Body of pancreas (tissue), 4 donors: ENCODE measurements at regions of chr5 and their contacts with region 1.

Region 1: GRCh38 chr5:90434116-90434714 is 24.7 kb upstream of the CETN3 start:
- DNase-seq: peak; percentile 27 to 65 (median 38)
- ATAC-seq: no peak
- H3K4me3 ChIP-seq: no peak overlapping the region
- H3K27ac ChIP-seq: no peak overlapping the region
- H3K4me1 ChIP-seq: peaks cover 7% of the 10 kb centered on the region
- H3K27me3 ChIP-seq: no peaks in the 10 kb centered on the region
- CTCF ChIP-seq: peak in 6 of 7 experiments; percentile 22 to 57 (median 40)
- POLR2A ChIP-seq: no peak

Region 2: DNA sequence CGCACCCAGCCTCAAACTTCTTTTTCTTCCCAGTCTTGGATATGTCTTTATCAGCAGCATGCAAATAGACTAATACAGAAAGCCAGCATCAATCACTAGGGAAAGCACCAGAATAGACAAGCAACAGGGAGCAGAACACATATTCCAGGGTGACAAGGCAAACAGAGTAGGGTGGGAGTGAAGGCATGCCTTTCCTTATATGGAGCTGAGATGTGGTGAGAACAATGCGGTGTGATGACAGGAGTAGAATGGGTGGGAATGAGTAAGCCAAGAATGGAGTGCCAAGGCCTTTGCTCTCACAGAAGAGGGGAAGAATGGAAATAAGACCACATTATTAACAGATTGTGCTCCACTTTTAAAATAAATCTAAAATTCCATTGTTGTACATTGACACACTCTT is 140.3 kb before region 1 on chr5:
- intact Hi-C with region 1: no loop called
- DNase-seq: no peak
- ATAC-seq: no peak
- H3K4me3 ChIP-seq: no peak overlapping the region
- H3K27ac ChIP-seq: no peak overlapping the region
- H3K4me1 ChIP-seq: no peaks in the 10 kb centered on the region
- H3K27me3 ChIP-seq: no peaks in the 10 kb centered on the region
- CTCF ChIP-seq: no peak
- POLR2A ChIP-seq: no peak

Region 3: DNA sequence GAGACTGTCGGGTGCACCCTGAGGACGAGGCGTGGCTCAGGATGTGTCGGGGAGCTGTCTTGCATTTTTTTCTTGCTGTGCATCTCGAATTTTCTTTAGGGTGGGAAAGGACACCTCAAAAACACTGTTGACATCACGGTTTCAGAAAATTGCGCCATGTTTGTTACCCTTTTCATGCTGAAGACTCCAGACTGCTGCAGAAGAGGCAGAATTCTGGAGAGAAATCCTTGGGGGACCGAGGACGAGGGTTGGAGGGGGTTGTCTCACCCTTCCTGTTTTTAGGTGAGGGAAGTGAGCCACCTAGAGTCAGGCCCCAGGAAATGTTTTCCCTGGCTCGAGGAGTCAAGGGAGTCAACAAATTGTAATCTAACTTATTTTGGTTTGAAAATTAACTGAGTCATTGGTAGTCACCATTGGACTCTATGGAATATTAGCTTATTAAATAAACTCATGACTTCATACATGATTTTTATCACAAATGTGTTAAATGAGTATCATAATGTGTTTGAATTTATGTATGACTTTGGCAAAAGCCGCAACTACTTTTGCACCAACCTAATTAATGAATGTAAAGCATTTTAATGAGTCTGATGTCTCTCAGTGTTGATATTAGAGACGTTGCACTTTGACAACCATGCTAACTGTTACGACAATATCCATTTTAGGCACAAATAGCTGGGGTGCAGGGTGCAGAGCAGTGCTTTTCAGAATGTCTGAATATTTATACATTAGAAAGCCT is 95.9 kb after region 1 on chr5:
- intact Hi-C with region 1: loop called (anchors 10 kb)
- DNase-seq: peak; percentile 72 to 81 (median 75)
- ATAC-seq: peak; percentile 76
- H3K4me3 ChIP-seq: peak overlapping the region; percentile 87 to 91
- H3K27ac ChIP-seq: peak overlapping the region; percentile 76 to 94 (median 89)
- H3K4me1 ChIP-seq: peaks cover 31% of the 10 kb centered on the region
- H3K27me3 ChIP-seq: no peaks in the 10 kb centered on the region
- CTCF ChIP-seq: peak; percentile 29 to 87 (median 73)
- POLR2A ChIP-seq: no peak